ENCODE measurements at regions of chr13 and their contacts with region 1.

Region 1: GRCh38 chr13:110715395-110716235 is 2.1 kb downstream of the ING1 start:
- DNase-seq: peak; percentile 95
- H3K4me3 ChIP-seq: peak overlapping the region; percentile 79 to 99 (median 95)
- H3K27ac ChIP-seq: peak overlapping the region; percentile 99 to 100 (median 99)
- H3K4me1 ChIP-seq: peaks cover 0 to 35% (median 26%) of the 10 kb centered on the region in 3 donors
- H3K27me3 ChIP-seq: no peaks in the 10 kb centered on the region
- CTCF ChIP-seq: peak in 2 of 6 experiments; percentile 18 to 31
- POLR2A ChIP-seq: peak in 2 of 4 donors; percentile 90 to 95

Region 2: GRCh38 chr13:110274687-110275086 is 440.9 kb before region 1 on chr13:
- intact Hi-C with region 1: no loop called
- DNase-seq: no peak
- H3K4me3 ChIP-seq: no peak overlapping the region
- H3K27ac ChIP-seq: peak overlapping the region in 1 of 4 donors; percentile 17
- H3K4me1 ChIP-seq: peaks cover 0 to 54% (median 12%) of the 10 kb centered on the region in 3 donors
- H3K27me3 ChIP-seq: no peaks in the 10 kb centered on the region
- CTCF ChIP-seq: no peak
- POLR2A ChIP-seq: no peak

Region 3: DNA sequence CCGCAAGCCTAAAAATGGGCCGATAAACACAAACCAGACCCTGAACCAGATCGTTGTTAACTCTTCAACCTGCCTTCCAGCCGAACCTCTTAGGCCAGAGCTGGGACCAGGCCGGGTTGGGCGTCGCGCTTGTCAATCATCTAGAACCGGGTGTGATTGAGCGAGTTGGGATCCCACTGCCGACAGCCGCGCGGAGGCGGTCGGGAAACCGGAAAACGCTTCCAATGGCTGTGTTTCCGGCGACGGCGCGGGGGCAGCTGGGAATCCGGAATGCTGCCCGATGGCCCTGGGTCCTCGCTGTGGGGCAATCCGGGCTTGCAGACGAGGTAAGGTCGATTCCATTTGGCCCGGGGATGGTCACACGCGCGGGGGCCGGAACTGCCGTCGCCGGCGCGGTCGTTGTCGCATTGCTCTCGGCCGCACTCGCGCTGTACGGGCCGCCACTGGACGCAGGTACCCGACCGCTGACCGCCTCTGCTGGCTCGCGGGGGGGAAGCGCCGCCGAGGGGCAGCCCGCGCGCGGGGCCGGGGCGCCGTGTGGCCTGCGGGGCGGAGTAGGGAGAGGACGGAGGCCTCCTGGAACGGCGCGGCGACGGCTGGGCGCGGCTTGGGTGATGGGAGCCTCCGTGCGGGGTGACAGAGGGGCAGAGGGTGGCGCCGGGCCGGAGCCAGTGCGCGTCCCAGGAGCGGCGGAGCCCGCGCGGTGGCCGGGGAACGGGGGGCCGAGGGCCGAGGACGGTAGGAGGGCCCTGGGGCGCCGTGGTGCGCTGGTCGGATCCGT is 100.1 kb before region 1 on chr13 and contains the start of gene NAXD:
- intact Hi-C with region 1: loop called (anchors 10 kb)
- DNase-seq: peak; percentile 48
- H3K4me3 ChIP-seq: peak within 1 kb of the TSS; percentile 71 to 97 (median 85)
- H3K27ac ChIP-seq: peak within 1 kb of the TSS; percentile 89 to 96 (median 93)
- H3K4me1 ChIP-seq: peaks cover 16 to 53% (median 19%) of the 10 kb centered on the region in 3 donors
- H3K27me3 ChIP-seq: no peaks in the 10 kb centered on the region
- CTCF ChIP-seq: no peak
- POLR2A ChIP-seq: peak in 3 of 4 donors; percentile 35 to 69 (median 61)
- total RNA-seq, gene NAXD: 14.5 to 25.2 (median 17.4) TPM

Region 4: DNA sequence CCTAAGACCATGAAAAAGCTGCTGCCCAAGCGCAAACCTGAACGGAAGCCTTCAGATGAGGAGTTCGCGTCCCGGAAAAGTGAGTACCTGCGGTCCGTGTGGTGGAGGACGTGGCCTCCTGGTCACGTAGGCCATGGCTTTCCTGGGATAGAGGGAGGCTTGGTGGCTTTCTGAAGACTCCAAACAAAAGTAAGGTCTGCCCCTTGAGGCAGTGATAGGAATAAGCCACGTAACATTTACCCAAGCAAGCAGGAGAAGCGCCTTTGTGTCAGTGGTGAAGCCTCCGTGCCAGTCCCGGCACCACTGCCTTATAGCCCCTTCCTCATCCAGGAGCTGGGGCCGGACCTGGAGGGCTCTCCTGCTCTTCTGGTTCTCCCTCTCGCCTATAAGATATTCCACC is 570.5 kb after region 1 on chr13:
- intact Hi-C with region 1: no loop called
- DNase-seq: no peak
- H3K4me3 ChIP-seq: no peak overlapping the region
- H3K27ac ChIP-seq: peak overlapping the region in 1 of 4 donors; percentile 17
- H3K4me1 ChIP-seq: peaks cover 13 to 35% (median 19%) of the 10 kb centered on the region in 3 donors
- H3K27me3 ChIP-seq: no peaks in the 10 kb centered on the region
- CTCF ChIP-seq: no peak
- POLR2A ChIP-seq: no peak